ENCODE measurements at regions of chr9 and their contacts with region 1.

Region 1: DNA sequence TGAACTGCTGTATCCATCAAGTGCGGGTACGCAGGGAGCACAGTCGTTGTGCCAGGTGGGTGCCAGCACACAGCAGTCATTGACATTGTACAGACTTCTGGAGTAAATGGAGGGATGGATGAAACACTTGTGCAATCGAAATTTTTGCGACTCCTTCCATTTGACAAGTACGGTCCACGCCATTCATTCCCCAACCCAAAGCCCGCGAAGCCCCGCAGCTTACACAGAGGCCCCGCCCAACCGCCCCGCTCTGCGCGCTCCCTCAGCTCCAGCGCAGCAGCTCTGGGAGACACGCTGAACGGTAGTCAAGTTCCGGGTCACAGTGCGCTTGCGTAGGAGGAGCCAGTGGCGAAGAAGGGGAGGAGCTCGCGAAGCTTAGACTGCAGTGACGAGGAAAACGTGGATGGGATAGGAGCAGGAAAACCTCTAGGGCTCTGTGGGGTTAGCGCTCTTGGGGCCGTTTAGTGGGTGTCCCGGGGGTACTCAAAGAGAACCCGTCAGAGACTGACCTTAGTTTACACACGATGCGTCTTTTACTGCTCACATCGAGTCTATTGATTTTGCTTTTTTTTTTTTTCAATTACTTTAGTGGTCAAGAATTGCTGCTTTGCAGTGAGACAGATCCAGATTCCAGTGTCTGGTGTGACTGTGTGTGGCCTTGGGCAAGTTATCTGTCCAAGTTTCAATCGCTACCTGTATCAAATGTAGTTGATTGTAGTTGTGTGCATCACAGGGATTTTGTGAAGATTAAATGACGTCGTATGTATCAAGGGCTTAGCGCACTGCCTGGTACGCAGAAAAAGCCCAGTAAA is 15.3 kb upstream of the MSANTD3 start:
- DNase-seq: peak; percentile 96
- H3K4me3 Mint-ChIP-seq: peak overlapping the region; percentile 86
- H3K27ac Mint-ChIP-seq: peak overlapping the region; percentile 80
- H3K4me1 Mint-ChIP-seq: peaks cover 12% of the 10 kb centered on the region
- H3K27me3 Mint-ChIP-seq: peaks cover 18% of the 10 kb centered on the region

Region 2: DNA sequence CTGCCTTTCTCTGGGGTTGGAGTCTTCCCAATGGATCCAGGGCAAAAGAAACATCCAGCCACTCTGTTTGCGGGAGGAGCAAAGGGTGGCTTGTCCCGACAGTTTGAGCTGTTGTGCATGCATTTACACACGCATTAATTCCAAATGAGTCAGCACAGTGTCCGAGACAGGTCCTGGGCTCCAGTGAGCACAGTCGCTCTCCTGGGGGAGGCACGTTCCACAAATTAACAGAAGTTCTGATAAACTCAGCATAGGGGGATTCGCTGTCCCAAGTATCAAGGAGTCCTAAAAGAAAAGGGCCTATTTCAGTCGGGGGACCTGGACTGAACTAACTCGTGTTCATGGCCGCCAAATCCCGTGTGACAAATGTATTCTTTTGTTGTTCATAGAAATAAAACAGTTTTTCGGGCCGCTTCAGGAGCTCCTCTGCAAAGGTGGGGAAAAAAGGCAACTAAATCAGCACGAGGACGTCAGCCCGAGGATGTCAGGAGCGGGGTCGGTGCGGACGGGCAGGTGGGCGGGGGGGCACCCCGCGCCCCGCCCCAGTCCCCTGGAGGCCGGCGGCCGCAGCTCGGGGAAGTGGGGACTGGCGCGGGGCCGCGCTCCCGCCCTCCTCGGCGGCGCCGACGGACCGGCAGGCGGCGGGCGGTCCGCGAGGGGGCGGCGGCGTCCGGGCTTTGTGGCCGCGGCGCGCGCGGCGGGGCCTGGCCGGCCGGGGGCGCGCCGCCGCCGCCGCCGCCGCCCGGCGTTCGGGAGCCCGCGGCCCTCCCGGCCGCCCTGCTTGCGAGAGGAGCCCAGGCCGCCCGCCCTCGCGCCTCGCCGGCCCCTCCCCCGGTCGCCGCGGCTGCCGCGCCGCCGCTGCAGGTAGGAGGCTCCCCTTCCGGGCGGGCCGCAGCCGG is 15.1 kb after region 1 on chr9 and contains the start of gene MSANTD3:
- intact Hi-C with region 1: loop called (anchors 1 kb)
- DNase-seq: peak; percentile 86
- H3K4me3 Mint-ChIP-seq: peak within 1 kb of the TSS; percentile 85
- H3K27ac Mint-ChIP-seq: peak within 1 kb of the TSS; percentile 95
- H3K4me1 Mint-ChIP-seq: peaks cover 36% of the 10 kb centered on the region
- H3K27me3 Mint-ChIP-seq: peaks cover 17% of the 10 kb centered on the region
- total RNA-seq, gene MSANTD3: 10.0 and 13.9 TPM in 2 replicates

Region 3: GRCh38 chr9:100959226-100959625 is 547.5 kb after region 1 on chr9:
- intact Hi-C with region 1: no loop called
- DNase-seq: no peak
- H3K4me3 Mint-ChIP-seq: no peak overlapping the region
- H3K27ac Mint-ChIP-seq: no peak overlapping the region
- H3K4me1 Mint-ChIP-seq: no peaks in the 10 kb centered on the region
- H3K27me3 Mint-ChIP-seq: no peaks in the 10 kb centered on the region